ENCODE measurements at regions of chr3 and their contacts with region 1.

Region 1: GRCh38 chr3:182618085-182618732 is 175.1 kb upstream of the ATP11B start:
- DNase-seq: no peak
- ATAC-seq: peak; percentile 74
- H3K4me3 ChIP-seq: no peak overlapping the region
- H3K27ac ChIP-seq: no peak overlapping the region
- H3K4me1 ChIP-seq: peaks cover 5 to 14% of the 10 kb centered on the region in 2 experiments
- H3K27me3 ChIP-seq: no peaks in the 10 kb centered on the region
- CTCF ChIP-seq: peak; percentile 71 to 84 (median 77)
- POLR2A ChIP-seq: no peak
- RAD21 ChIP-seq: peak; percentile 95

Region 2: DNA sequence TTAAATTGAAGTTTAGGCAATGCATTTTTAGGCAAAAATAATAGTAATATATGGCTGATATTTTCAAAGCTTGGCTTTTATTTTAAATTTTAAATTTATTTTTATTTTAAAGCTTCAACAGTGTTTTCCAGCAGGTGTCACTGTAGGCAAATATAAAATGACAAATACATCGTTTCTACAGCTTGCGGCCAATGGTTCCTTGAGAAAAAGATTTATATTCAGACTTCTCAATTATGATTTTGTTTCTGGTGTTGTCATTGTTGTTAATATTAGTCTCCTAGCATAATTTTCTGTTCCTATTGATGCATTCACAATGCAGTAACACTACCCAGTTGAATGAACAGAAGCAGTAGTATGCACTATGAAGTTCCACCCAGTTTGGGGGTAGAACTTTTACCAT is 1407.9 kb before region 1 on chr3:
- CTCF ChIA-PET with region 1: no interaction called
- POLR2A ChIA-PET with region 1: no interaction called
- RAD21 ChIA-PET with region 1: no interaction called
- intact Hi-C with region 1: loop called (anchors 5 kb)
- DNase-seq: peak; percentile 12
- ATAC-seq: no peak
- H3K4me3 ChIP-seq: no peak overlapping the region
- H3K27ac ChIP-seq: no peak overlapping the region
- H3K4me1 ChIP-seq: no peaks in the 10 kb centered on the region
- H3K27me3 ChIP-seq: peaks cover 33% of the 10 kb centered on the region
- CTCF ChIP-seq: peak in 2 of 3 experiments; percentile 35 to 38; a peak in 4 of 6 replicates
- POLR2A ChIP-seq: no peak
- RAD21 ChIP-seq: peak; percentile 54

Region 3: GRCh38 chr3:181567311-181568075 is 1050.7 kb before region 1 on chr3:
- CTCF ChIA-PET with region 1: no interaction called
- POLR2A ChIA-PET with region 1: no interaction called
- RAD21 ChIA-PET with region 1: no interaction called
- intact Hi-C with region 1: loop called (anchors 10 kb)
- DNase-seq: no peak
- ATAC-seq: no peak
- H3K4me3 ChIP-seq: no peak overlapping the region
- H3K27ac ChIP-seq: no peak overlapping the region
- H3K4me1 ChIP-seq: no peaks in the 10 kb centered on the region
- H3K27me3 ChIP-seq: peaks cover 64% of the 10 kb centered on the region
- CTCF ChIP-seq: no peak
- POLR2A ChIP-seq: no peak
- RAD21 ChIP-seq: no peak

Region 4: DNA sequence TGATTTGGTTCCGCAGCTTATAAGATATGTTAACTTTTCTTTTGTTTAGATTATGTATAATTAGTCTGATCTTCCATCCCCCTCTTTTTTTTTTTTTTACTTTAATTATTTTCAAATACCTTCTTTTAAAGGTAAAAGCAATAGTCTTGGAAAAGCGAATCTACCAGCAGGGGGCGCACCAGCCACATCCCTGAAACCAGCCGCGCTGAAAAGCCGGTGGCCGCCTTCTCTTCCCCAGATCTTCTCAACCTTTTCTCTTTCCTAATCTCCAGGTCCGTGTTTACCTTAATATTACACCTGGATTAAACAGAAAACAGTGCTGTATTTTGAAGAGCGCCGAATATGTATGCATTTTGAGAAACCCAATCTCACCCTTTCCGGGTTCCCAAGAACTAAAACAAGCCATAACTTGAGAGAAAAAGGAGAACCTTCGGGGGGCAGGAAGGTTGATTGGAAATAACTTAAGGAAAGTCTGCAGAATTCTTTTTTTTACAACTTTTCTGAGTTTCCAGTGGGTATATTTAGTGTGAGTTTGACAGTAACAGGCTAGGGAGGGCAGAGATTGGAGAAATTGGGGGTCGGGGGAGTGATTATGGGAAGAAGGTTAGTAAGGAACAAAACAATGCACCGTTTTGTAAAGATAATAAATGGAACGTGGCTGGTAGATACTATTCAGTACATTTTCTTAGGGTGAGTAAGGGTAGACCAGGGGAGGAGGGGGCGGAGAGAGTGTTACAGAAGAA is 908.5 kb before region 1 on chr3:
- CTCF ChIA-PET with region 1: interaction called, 4 read pairs
- POLR2A ChIA-PET with region 1: no interaction called
- RAD21 ChIA-PET with region 1: no interaction called
- intact Hi-C with region 1: loop called (anchors 1 kb)
- DNase-seq: peak; percentile 29
- ATAC-seq: peak; percentile 60
- H3K4me3 ChIP-seq: peak overlapping the region; percentile 21 to 26
- H3K27ac ChIP-seq: no peak overlapping the region
- H3K4me1 ChIP-seq: peaks cover 11 to 16% of the 10 kb centered on the region in 2 experiments; a peak in 2 of 4 replicates
- H3K27me3 ChIP-seq: no peaks in the 10 kb centered on the region
- CTCF ChIP-seq: peak; percentile 49 to 78 (median 75)
- POLR2A ChIP-seq: no peak
- RAD21 ChIP-seq: peak; percentile 89

Region 5: DNA sequence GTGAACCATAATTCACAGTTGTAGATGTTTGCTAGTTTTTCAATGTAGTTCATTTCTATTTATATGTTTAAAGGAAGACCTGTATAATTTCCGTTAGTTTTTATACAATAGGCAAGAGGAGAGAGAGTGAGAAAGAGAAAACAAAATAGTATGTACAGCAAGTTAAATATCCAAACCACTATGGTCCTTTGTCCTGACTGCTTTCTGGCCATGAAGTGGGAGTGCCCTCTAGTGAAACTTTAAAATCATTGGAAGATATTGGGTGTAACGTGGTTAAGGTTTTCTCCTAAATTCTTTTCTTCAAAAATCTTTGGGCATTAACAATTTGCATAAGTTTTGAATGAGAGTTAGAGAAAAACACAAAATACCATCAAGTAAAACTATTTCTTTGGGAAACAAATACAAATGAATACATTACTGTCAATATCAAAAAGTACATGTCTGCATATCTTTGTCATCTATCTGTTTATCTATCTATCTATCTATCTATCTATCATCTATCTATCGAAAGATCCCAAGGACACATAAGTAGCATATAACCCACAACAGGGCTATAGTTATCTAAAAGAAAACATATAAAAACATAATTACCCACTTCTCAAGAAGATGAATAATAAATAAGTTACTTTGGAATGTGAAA is 359.6 kb before region 1 on chr3:
- CTCF ChIA-PET with region 1: no interaction called
- POLR2A ChIA-PET with region 1: no interaction called
- RAD21 ChIA-PET with region 1: no interaction called
- intact Hi-C with region 1: loop called (anchors 2 kb)
- DNase-seq: peak; percentile 31
- ATAC-seq: peak; percentile 73
- H3K4me3 ChIP-seq: no peak overlapping the region
- H3K27ac ChIP-seq: no peak overlapping the region
- H3K4me1 ChIP-seq: no peaks in the 10 kb centered on the region
- H3K27me3 ChIP-seq: no peaks in the 10 kb centered on the region
- CTCF ChIP-seq: peak; percentile 60 to 72 (median 68); a peak in 5 of 6 replicates
- POLR2A ChIP-seq: no peak
- RAD21 ChIP-seq: peak; percentile 93

Region 6: DNA sequence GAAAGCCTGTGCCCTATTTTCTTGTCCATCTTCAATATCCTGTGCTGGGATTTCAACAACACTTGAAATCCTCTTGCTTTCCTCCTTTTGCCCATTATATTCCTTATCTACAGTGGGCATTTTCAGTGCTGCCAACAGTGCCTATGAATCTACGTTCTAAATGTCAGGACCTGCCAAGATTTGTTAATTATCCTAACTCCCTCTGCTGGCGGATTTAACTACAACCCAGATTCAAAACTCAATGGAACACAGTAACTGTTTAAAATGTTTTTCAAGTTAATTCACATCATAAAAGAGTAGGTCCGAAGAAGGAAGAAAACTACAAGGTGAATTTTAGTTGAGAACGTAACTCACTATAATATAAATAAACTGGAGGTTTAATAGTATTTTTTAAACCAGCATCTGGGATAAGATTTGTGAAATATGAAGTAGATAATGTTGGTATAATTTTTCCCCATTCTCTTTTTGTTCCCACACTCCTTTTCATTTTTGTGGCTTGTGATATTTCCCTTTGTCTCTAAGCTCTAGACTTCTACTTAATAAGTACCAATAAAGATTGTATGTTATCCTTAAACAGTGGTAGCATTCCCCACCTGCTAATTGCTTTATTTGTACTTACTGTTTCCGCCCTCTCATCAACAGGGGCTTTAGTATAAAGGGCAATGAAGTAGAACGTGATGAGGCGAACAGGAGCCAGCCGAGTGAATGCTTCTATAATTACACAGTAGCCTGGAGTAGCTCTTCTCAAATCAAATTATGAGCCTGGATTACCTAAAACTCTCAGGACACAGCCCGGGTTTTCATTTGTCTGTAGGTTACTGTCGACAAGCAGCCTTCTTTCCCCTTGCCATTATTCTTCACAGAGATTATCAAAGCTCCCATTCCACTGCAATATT is 127.4 kb before region 1 on chr3:
- CTCF ChIA-PET with region 1: no interaction called
- POLR2A ChIA-PET with region 1: no interaction called
- RAD21 ChIA-PET with region 1: no interaction called
- intact Hi-C with region 1: loop called (anchors 5 kb)
- DNase-seq: peak; percentile 40
- ATAC-seq: peak; percentile 85
- H3K4me3 ChIP-seq: no peak overlapping the region
- H3K27ac ChIP-seq: no peak overlapping the region
- H3K4me1 ChIP-seq: no peaks in the 10 kb centered on the region
- H3K27me3 ChIP-seq: no peaks in the 10 kb centered on the region
- CTCF ChIP-seq: peak; percentile 54 to 72 (median 55)
- POLR2A ChIP-seq: no peak
- RAD21 ChIP-seq: peak; percentile 74